ENCODE measurements at regions of chr9 and their contacts with region 1.

Region 1: GRCh38 chr9:99906403-99907207 is at the start of gene STX17:
- DNase-seq: peak; percentile 89
- H3K4me3 ChIP-seq: peak within 1 kb of the TSS; percentile 81 to 93
- H3K27ac ChIP-seq: peak within 1 kb of the TSS; percentile 94 to 98
- H3K4me1 ChIP-seq: peaks cover 11% of the 10 kb centered on the region
- H3K27me3 ChIP-seq: no peaks in the 10 kb centered on the region
- CTCF ChIP-seq: no peak
- POLR2A ChIP-seq: peak; percentile 61
- total RNA-seq, gene STX17: 38.8 to 60.6 TPM

Region 2: DNA sequence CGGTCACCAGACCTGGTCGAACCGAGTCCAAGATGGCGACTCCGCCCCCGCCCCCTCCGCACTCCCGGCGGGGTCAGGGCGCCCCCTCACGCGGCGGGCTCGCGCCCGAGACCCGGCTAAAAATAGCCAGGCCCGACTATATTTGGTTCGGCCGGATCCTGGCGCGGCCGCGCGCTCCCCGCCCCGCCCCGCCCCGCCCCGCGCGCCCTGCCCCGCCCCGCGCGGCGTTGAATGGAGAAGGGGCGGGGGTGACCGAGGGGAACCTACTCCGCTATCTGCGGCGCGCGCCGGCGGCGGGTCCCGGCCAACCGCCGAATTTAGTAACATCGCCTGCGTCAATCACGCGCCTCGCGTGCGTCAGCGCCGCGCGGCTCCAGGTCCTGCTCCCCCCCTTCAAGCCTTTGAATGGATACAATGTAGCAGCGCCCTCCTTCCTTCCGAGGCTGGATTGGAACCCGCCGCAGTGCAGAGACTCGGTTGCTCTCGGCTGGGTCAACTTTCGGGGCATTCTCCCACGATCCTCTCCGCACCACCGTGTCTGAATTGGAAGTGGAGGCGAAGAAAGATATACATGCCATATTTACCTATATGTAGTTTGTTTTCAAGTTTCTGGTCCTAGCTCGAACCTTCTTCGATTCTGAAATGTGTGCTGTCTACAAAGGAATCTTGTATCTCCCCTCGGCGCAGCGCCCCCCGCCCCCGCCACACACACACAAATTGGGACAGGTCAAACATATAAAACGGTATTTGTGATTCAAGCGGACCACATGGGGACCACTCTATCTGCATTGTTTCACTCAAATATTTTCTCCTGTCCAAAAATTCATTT is 86.5 kb before region 1 on chr9:
- intact Hi-C with region 1: loop called (anchors 5 kb)
- DNase-seq: peak; percentile 98
- H3K4me3 ChIP-seq: peak overlapping the region; percentile 83 to 97
- H3K27ac ChIP-seq: peak overlapping the region; percentile 99 to 100
- H3K4me1 ChIP-seq: peaks cover 34% of the 10 kb centered on the region
- H3K27me3 ChIP-seq: no peaks in the 10 kb centered on the region
- CTCF ChIP-seq: no peak
- POLR2A ChIP-seq: peak; percentile 30

Region 3: DNA sequence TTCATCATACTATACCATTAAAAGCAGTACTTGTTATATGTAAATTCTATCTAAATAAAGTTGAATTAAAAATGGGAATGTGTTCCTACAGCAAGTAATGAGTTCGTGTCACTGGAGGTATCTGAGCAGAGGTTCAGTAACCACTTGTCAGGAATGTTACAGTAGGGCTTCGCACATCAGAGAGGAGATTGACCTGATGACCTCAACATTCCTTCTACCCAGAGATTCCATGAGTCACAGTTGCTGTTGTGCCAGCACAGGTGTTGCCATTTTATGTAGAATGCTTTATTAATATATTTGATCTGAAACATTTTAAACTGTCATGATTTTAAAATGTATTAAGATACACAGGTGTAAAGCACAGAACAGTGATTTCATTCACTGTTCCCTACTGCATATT is 60.1 kb after region 1 on chr9:
- intact Hi-C with region 1: no loop called
- DNase-seq: no peak
- H3K4me3 ChIP-seq: no peak overlapping the region
- H3K27ac ChIP-seq: no peak overlapping the region
- H3K4me1 ChIP-seq: no peaks in the 10 kb centered on the region
- H3K27me3 ChIP-seq: no peaks in the 10 kb centered on the region
- CTCF ChIP-seq: no peak
- POLR2A ChIP-seq: no peak

Region 4: GRCh38 chr9:100038472-100038871 is 131.9 kb after region 1 on chr9:
- intact Hi-C with region 1: no loop called
- DNase-seq: no peak
- H3K4me3 ChIP-seq: no peak overlapping the region
- H3K27ac ChIP-seq: no peak overlapping the region
- H3K4me1 ChIP-seq: no peaks in the 10 kb centered on the region
- H3K27me3 ChIP-seq: no peaks in the 10 kb centered on the region
- CTCF ChIP-seq: no peak
- POLR2A ChIP-seq: no peak